ENCODE measurements at regions of chr13 and their contacts with region 1.

Region 1: DNA sequence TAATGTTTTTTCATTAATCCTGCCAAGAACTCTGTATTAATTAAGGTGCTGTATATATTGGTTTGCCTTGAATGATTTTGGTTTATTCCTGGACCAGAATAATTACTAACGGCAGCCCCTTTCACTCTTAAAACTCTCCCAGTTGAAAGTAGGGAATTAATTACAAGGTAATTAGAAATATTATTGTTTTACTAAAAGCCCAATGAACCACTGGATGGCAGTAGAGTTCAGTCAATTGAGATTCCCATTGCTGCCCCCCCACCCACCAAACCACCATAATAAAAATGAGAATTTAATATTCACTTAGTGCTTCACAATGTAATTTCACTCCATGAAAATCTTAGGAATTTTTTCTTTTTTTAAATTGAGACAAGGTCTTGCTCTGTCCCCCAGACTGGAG is 13.7 kb downstream of the WBP4 start:
- DNase-seq: peak in 25 of 35 experiments; percentile 4 to 73 (median 25)
- ATAC-seq: peak in 1 of 4 experiments; percentile 44
- H3K4me3 ChIP-seq: no peak overlapping the region
- H3K4me3 Mint-ChIP-seq: no peak overlapping the region
- H3K27ac ChIP-seq: no peak overlapping the region
- H3K27ac Mint-ChIP-seq: no peak overlapping the region
- H3K4me1 ChIP-seq: no peaks in the 10 kb centered on the region
- H3K4me1 Mint-ChIP-seq: no peaks in the 10 kb centered on the region
- H3K27me3 ChIP-seq: no peaks in the 10 kb centered on the region
- H3K27me3 Mint-ChIP-seq: no peaks in the 10 kb centered on the region

Region 2: DNA sequence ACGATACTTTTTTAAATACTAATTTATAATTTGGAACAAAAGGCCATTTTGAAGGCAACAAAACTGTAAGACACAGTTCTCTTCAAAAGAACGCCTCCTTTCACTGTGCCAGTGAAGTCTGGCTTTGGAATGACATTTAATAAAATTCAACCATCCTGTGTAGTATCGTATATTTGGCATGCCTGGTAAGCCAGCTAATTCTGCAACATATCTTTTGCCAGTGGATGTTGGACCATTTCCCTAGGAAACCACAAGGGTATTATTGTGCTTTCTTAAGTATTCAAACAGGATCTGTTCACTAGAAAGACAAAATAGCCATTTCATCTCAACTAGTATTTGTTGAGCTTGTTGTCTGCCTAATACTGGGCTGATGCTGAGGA is 493.9 kb after region 1 on chr13:
- CTCF ChIA-PET with region 1: no interaction called
- POLR2A ChIA-PET with region 1: no interaction called
- DNase-seq: no peak
- ATAC-seq: no peak
- H3K4me3 ChIP-seq: no peak overlapping the region
- H3K4me3 Mint-ChIP-seq: no peak overlapping the region
- H3K27ac ChIP-seq: no peak overlapping the region
- H3K27ac Mint-ChIP-seq: peak overlapping the region; percentile 4 to 35
- H3K4me1 ChIP-seq: no peaks in the 10 kb centered on the region
- H3K4me1 Mint-ChIP-seq: peaks cover 2 to 4% (median 4%) of the 10 kb centered on the region in 3 donors
- H3K27me3 ChIP-seq: no peaks in the 10 kb centered on the region
- H3K27me3 Mint-ChIP-seq: no peaks in the 10 kb centered on the region

Region 3: GRCh38 chr13:41827507-41828213 is 752.6 kb after region 1 on chr13:
- CTCF ChIA-PET with region 1: no interaction called
- POLR2A ChIA-PET with region 1: interaction called in 1 of 2 experiments, 17 read pairs
- DNase-seq: no peak
- ATAC-seq: no peak
- H3K4me3 ChIP-seq: no peak overlapping the region
- H3K4me3 Mint-ChIP-seq: no peak overlapping the region
- H3K27ac ChIP-seq: no peak overlapping the region
- H3K27ac Mint-ChIP-seq: no peak overlapping the region
- H3K4me1 ChIP-seq: no peaks in the 10 kb centered on the region
- H3K4me1 Mint-ChIP-seq: no peaks in the 10 kb centered on the region
- H3K27me3 ChIP-seq: no peaks in the 10 kb centered on the region
- H3K27me3 Mint-ChIP-seq: no peaks in the 10 kb centered on the region

Measured in T-cell (primary cell).